WTC11 (cell line): ENCODE measurements at regions of chr7 and their contacts with region 1.

Region 1: GRCh38 chr7:31633894-31634494 is 53.0 kb upstream of the PPP1R17 start:
- DNase-seq: peak; percentile 67
- ATAC-seq: peak; percentile 95
- H3K4me3 Mint-ChIP-seq: no peak overlapping the region
- H3K27ac Mint-ChIP-seq: no peak overlapping the region
- H3K4me1 Mint-ChIP-seq: peaks cover 5% of the 10 kb centered on the region
- H3K27me3 Mint-ChIP-seq: peaks cover 3% of the 10 kb centered on the region; the same call in 1 of the 2 replicates
- CTCF ChIP-seq: peak; percentile 41

Region 2: GRCh38 chr7:31336202-31337001 is 297.6 kb before region 1 on chr7:
- CTCF ChIA-PET with region 1: interaction called, 18 read pairs
- POLR2A ChIA-PET with region 1: no interaction called
- DNase-seq: peak; percentile 66
- ATAC-seq: peak; percentile 87
- H3K4me3 Mint-ChIP-seq: peak overlapping the region; percentile 74
- H3K27ac Mint-ChIP-seq: no peak overlapping the region
- H3K4me1 Mint-ChIP-seq: 0 out of 2 replicates have a peak, but pooled peaks cover 2% of the 10 kb centered on the region
- H3K27me3 Mint-ChIP-seq: peaks cover 62% of the 10 kb centered on the region
- CTCF ChIP-seq: peak; percentile 69